Mammary epithelial cell (primary cell): ENCODE measurements at regions of chr11 and their contacts with region 1.

Region 1: DNA sequence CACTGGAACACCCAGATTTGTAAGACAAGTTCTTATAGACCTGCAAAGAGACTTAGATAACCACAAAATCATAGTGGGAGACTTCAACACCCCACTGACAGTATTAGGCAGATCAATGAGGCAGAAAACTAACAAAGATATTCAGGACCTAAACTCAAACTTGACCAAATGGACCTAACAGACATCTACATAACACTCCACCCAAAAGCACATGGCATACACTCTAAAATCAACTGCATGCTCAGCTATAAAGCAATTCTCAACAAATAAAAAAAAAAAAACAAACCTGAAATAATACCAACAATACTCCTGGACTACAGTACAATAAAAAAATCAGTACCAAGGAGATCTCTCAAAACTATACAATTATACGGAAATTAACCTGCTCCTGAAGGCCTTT is 115.0 kb downstream of the FDX1 start:
- DNase-seq: no peak
- H3K4me3 ChIP-seq: no peak overlapping the region
- H3K27ac ChIP-seq: no peak overlapping the region
- H3K4me1 ChIP-seq: no peaks in the 10 kb centered on the region
- H3K27me3 ChIP-seq: peaks cover 2% of the 10 kb centered on the region
- CTCF ChIP-seq: no peak

Region 2: GRCh38 chr11:110479108-110480101 is 65.4 kb before region 1 on chr11:
- CTCF ChIA-PET with region 1: no interaction called
- dilution Hi-C with region 1: loop called (anchors 5 kb)
- in situ Hi-C with region 1: no loop called
- intact Hi-C with region 1: no loop called
- DNase-seq: peak; percentile 62
- H3K4me3 ChIP-seq: no peak overlapping the region
- H3K27ac ChIP-seq: no peak overlapping the region
- H3K4me1 ChIP-seq: peaks cover 9% of the 10 kb centered on the region
- H3K27me3 ChIP-seq: no peaks in the 10 kb centered on the region
- CTCF ChIP-seq: no peak

Region 3: GRCh38 chr11:110573411-110573810 is 28.6 kb after region 1 on chr11:
- CTCF ChIA-PET with region 1: no interaction called
- dilution Hi-C with region 1: no loop called
- in situ Hi-C with region 1: no loop called
- intact Hi-C with region 1: no loop called
- DNase-seq: no peak
- H3K4me3 ChIP-seq: no peak overlapping the region
- H3K27ac ChIP-seq: no peak overlapping the region
- H3K4me1 ChIP-seq: no peaks in the 10 kb centered on the region
- H3K27me3 ChIP-seq: peaks cover 2% of the 10 kb centered on the region
- CTCF ChIP-seq: no peak